ENCODE measurements at regions of chr12 and their contacts with region 1.

Region 1: GRCh38 chr12:121933522-121934308 is 15.3 kb downstream of the CFAP251 start:
- DNase-seq: peak; percentile 93 to 96 (median 94)
- ATAC-seq: peak; percentile 98
- H3K4me3 ChIP-seq: peak overlapping the region; percentile 47
- H3K27ac ChIP-seq: peak overlapping the region; percentile 95
- H3K4me1 ChIP-seq: peaks cover 25 to 29% of the 10 kb centered on the region in 2 experiments; a peak in 4 of 5 replicates
- H3K27me3 ChIP-seq: no peaks in the 10 kb centered on the region
- CTCF ChIP-seq: peak; percentile 65 to 68 (median 66)
- EP300 ChIP-seq: peak; percentile 79
- POLR2A ChIP-seq: peak; percentile 80
- RAD21 ChIP-seq: peak; percentile 33 to 51; a peak in 3 of 4 replicates

Region 2: DNA sequence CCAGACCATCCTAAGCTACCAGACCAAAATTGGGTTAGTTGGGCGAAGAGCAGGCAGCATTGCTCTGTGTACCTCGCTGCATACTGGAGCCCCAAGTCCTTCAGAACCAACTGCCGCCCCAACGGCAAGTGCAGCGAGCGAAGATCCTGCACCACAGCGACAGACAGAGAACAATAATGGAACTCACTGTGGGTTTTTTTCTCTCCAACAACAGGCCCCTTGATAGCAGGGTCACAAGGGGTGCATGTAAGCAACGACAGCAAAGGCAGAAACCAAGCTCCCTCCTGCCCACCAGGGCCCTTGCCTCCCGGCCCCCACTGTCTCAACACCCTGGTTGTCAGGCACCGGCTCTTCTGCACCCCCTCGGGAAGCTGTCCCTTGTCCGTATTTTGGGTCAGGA is 494.8 kb before region 1 on chr12:
- CTCF ChIA-PET with region 1: no interaction called
- POLR2A ChIA-PET with region 1: no interaction called
- in situ Hi-C with region 1: no loop called
- intact Hi-C with region 1: no loop called
- DNase-seq: no peak
- ATAC-seq: no peak
- H3K4me3 ChIP-seq: no peak overlapping the region
- H3K27ac ChIP-seq: no peak overlapping the region
- H3K4me1 ChIP-seq: peaks cover 0 to 21% of the 10 kb centered on the region in 2 experiments; a peak in 1 of 5 replicates
- H3K27me3 ChIP-seq: no peaks in the 10 kb centered on the region
- CTCF ChIP-seq: no peak
- EP300 ChIP-seq: no peak
- POLR2A ChIP-seq: no peak
- RAD21 ChIP-seq: no peak

Region 3: DNA sequence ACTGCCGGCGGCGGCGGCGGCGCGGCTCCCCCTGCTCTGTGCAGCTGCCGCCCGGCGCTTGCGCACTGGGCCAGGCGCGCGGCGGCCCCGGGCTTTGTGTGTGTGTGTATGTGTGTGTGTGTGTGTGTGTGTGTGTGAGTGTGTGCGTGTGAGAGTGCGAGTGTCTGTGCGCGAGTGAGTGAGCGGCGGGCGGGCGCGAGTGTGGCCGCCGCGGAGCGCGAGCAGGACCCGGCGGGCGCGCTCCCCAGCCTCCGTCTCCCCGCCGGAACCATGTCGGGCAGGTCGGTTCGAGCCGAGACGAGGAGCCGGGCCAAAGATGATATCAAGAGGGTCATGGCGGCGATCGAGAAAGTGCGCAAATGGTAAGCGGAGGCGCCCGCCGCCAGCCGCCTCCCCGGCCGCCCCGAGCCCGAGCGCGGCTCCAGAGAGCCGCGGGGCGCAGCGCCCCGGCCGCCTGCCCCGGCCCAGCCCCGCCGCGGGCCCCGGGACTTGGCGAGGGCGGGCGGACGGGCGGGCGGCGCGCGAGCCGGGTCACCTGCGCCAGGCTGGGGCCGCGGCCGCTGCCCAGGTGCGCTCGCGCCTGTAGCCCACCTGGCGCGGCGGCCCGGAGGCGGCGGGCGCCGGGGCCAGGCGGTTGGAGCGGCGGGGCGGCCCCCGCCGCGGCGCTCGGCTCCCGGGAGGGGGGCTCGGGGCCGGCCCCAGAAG is 88.3 kb after region 1 on chr12 and contains the start of gene BCL7A:
- CTCF ChIA-PET with region 1: no interaction called
- POLR2A ChIA-PET with region 1: no interaction called
- in situ Hi-C with region 1: no loop called
- intact Hi-C with region 1: loop called (anchors 5 kb)
- DNase-seq: peak; percentile 77 to 87 (median 82)
- ATAC-seq: peak; percentile 74
- H3K4me3 ChIP-seq: peak within 1 kb of the TSS; percentile 73
- H3K27ac ChIP-seq: peak within 1 kb of the TSS; percentile 93
- H3K4me1 ChIP-seq: peaks cover 17 to 41% of the 10 kb centered on the region in 2 experiments
- H3K27me3 ChIP-seq: no peaks in the 10 kb centered on the region; a peak in 1 of 5 replicates
- CTCF ChIP-seq: no peak
- EP300 ChIP-seq: no peak
- POLR2A ChIP-seq: peak; percentile 75
- RAD21 ChIP-seq: no peak
- polyA plus RNA-seq, gene BCL7A: 0.25 to 0.30 TPM

Measured in K562 (cell line).